ENCODE measurements at regions of chr14 and their contacts with region 1.

Region 1: DNA sequence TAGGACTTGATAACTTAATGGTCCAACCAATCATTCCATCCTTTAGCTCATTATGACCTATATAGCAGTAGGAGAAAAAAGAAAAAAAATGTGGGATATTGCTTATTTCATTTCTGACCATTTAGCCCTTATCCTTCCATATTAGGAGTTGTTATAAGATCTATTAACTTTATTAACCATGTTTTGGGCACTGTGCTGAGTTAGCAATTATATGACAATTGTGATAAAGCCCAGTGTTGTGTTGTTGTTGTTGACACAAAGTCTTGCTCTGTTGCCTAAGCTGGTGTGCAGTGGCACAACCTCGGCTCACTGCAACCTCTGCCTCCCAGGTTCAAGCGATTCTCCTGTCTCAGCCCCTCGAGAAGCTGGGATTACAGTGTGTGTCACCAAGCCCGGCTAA is 569.7 kb upstream of the FOXG1 start:
- DNase-seq: no peak
- H3K4me3 ChIP-seq: no peak overlapping the region
- H3K27ac ChIP-seq: no peak overlapping the region
- H3K4me1 ChIP-seq: no peaks in the 10 kb centered on the region
- CTCF ChIP-seq: no peak

Region 2: GRCh38 chr14:27410981-27411380 is 785.9 kb before region 1 on chr14:
- CTCF ChIA-PET with region 1: no interaction called
- POLR2A ChIA-PET with region 1: interaction called, 11 read pairs
- intact Hi-C with region 1: no loop called
- DNase-seq: no peak
- H3K4me3 ChIP-seq: no peak overlapping the region
- H3K27ac ChIP-seq: no peak overlapping the region
- H3K4me1 ChIP-seq: no peaks in the 10 kb centered on the region
- CTCF ChIP-seq: no peak